ENCODE measurements at regions of chr3 and their contacts with region 1.

Region 1: DNA sequence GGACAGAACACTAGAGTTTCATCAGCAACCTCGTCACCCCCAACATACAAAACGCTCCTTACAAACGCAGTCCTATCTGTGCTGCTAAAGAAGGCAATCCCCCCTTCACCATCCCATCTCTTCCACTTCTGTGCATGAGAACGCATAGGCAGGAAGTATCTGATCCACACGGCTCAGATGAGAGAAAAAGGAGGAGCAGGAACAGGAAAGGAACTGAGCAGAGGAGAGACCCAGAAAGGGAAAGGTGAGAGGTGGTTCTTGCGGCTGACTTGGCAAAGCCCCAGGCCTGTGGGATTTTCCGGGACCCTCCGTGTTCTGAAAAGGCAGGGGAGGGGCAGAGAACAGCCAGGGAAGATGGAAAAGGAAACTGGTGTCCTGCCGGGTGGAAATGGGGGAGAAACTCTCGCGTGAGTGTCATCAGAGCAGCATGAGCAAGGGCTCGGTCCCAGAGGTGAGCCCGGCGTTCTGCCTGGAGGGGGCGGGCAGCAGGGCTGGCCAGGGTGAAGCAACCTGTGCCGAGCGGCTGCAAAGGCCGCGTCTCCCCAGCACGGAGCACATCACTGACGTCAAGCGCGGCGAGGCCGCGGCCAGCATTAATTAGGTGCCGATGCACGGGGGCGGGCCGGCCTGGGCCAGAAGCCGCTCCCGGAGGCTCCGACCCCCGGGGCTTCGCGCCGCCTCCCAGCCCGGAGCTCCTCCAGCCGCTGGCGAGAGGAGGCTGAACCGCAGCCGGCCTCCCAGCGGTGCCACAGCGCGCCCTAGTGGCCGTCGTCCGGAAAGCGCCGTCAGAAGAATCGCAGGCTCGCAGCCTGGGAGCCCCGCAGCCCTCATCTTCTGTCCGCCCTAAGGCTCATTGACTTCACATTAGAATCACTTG is 35.8 kb downstream of the CPN2 start:
- DNase-seq: peak; percentile 95
- H3K4me3 Mint-ChIP-seq: peak overlapping the region; percentile 82
- H3K27ac Mint-ChIP-seq: peak overlapping the region; percentile 84
- H3K4me1 Mint-ChIP-seq: peaks cover 6% of the 10 kb centered on the region
- H3K27me3 Mint-ChIP-seq: no peaks in the 10 kb centered on the region
- CTCF ChIP-seq: peak; percentile 92

Region 2: GRCh38 chr3:193788189-193788991 is 526.9 kb before region 1 on chr3:
- CTCF ChIA-PET with region 1: interaction called, 107 read pairs
- POLR2A ChIA-PET with region 1: no interaction called
- intact Hi-C with region 1: loop called (anchors 2 kb)
- DNase-seq: peak; percentile 78
- H3K4me3 Mint-ChIP-seq: no peak overlapping the region
- H3K27ac Mint-ChIP-seq: no peak overlapping the region
- H3K4me1 Mint-ChIP-seq: peaks cover 5% of the 10 kb centered on the region
- H3K27me3 Mint-ChIP-seq: no peaks in the 10 kb centered on the region
- CTCF ChIP-seq: peak; percentile 47

Region 3: GRCh38 chr3:193872265-193872753 is 443.0 kb before region 1 on chr3:
- CTCF ChIA-PET with region 1: interaction called, 10 read pairs
- POLR2A ChIA-PET with region 1: no interaction called
- intact Hi-C with region 1: no loop called
- DNase-seq: peak; percentile 99
- H3K4me3 Mint-ChIP-seq: no peak overlapping the region
- H3K27ac Mint-ChIP-seq: peak overlapping the region; percentile 27
- H3K4me1 Mint-ChIP-seq: peaks cover 68% of the 10 kb centered on the region
- H3K27me3 Mint-ChIP-seq: peaks cover 12% of the 10 kb centered on the region
- CTCF ChIP-seq: no peak

Region 4: GRCh38 chr3:194134757-194135528 is 180.4 kb before region 1 on chr3:
- CTCF ChIA-PET with region 1: interaction called, 45 read pairs
- POLR2A ChIA-PET with region 1: interaction called, 193 read pairs
- intact Hi-C with region 1: loop called (anchors 1 kb)
- DNase-seq: peak; percentile 98
- H3K4me3 Mint-ChIP-seq: peak overlapping the region; percentile 97
- H3K27ac Mint-ChIP-seq: peak overlapping the region; percentile 73
- H3K4me1 Mint-ChIP-seq: peaks cover 24% of the 10 kb centered on the region
- H3K27me3 Mint-ChIP-seq: no peaks in the 10 kb centered on the region
- CTCF ChIP-seq: no peak

Region 5: GRCh38 chr3:194296454-194297263 is 18.7 kb before region 1 on chr3:
- CTCF ChIA-PET with region 1: interaction called, 20 read pairs
- POLR2A ChIA-PET with region 1: interaction called, 3 read pairs
- intact Hi-C with region 1: no loop called
- DNase-seq: peak; percentile 97
- H3K4me3 Mint-ChIP-seq: no peak overlapping the region
- H3K27ac Mint-ChIP-seq: peak overlapping the region; percentile 12
- H3K4me1 Mint-ChIP-seq: peaks cover 6% of the 10 kb centered on the region
- H3K27me3 Mint-ChIP-seq: no peaks in the 10 kb centered on the region
- CTCF ChIP-seq: no peak

Region 6: DNA sequence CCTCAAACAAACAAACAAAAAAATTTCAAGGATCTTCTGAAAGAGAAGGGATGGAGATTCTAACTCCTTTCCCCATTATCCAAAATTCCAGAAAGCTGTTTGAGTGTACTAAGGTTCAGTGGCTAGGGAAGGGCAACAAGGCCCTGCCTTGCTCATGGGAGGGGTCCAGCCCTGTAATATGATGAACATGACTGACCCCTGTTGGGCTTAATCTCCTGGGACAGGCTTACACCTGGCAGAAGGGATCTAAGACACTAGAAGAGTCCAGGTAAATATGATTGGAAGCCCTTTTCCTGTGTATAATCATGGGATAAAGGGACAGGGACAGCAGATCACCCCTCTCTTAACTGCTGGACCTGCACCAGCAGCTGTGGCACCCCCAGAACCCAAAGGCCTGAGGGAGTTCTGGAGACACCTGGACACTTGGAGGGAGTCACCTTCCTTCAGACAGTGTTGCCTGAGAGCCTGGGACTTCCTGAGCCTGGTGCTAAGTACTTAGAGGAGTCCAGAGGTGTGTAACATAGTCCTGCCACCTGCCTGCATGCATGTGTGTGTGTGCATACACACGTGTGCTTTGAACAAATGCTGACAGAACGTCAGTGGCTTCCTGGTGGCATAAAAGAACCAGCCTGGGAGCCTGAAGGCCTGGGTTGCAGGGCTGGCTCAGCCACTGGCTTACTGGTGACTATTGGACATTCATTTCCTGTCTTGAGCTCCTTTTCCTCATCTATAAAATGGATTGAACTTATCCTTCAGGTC is 38.8 kb after region 1 on chr3:
- CTCF ChIA-PET with region 1: no interaction called
- POLR2A ChIA-PET with region 1: no interaction called
- intact Hi-C with region 1: no loop called
- DNase-seq: no peak
- H3K4me3 Mint-ChIP-seq: no peak overlapping the region
- H3K27ac Mint-ChIP-seq: no peak overlapping the region
- H3K4me1 Mint-ChIP-seq: no peaks in the 10 kb centered on the region
- H3K27me3 Mint-ChIP-seq: peaks cover 24% of the 10 kb centered on the region
- CTCF ChIP-seq: no peak

Measured in MCF 10A (cell line).